Astrocyte of the cerebellum (primary cell): ENCODE measurements at regions of chr1 and their contacts with region 1.

Region 1: DNA sequence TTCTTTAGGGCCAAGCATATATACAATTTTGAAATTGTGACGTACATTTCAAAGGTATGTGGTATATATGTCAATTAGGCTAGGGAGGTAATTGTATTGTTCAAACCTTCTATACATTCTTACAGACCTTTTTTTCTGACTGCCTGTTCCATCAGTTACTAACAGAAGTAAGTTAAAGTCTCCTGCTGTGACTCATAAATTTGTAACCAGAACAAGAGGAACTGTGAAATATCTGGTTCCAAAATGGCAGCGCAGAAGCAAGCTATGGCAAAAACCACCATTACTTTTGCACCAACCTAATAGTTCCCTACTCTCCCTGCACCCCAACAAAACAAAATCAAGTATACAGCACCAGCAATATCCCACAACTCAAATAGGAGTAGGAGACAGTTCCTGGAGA is 93.6 kb downstream of the ENAH start:
- DNase-seq: no peak
- H3K4me3 ChIP-seq: no peak overlapping the region
- CTCF ChIP-seq: no peak

Region 2: DNA sequence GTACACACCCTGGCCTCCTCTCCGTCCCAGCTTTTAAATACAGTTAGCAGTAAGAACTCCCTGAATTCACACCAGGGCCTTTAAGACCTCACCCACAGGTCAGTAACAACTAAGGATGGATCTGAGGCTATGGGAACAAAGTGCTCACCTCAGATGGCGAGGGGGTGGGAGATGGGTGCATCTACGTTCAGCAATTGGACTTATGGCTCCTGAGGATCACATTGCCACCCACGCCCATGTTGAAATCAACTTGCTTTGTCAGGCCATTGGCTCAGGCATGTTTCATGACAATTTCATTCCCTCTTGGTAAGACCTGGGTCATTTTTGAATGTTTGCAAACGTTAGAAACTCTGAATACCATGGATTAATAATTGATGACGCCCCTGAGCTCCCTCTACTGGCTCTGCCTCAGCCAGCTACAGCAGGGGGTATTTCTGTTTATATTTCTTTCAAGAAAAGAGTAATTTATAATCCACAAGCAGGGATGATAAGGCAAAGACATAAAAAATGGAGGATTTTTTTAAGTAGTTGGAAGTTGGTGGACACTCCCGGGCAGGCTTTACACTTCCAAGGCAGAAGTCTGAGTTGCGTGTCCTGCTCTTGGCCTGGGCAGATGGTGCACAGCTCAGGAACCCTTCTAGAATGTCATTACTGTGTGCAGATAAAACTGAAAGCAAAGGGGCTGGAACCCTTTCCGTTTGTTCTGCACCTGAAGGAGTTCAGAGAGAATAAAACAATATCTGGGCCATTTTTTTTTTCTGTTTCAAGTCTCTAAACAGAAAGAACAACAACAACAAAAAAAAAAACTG is 117.8 kb before region 1 on chr1:
- in situ Hi-C with region 1: no loop called
- DNase-seq: no peak
- H3K4me3 ChIP-seq: no peak overlapping the region
- CTCF ChIP-seq: peak; percentile 24

Region 3: GRCh38 chr1:225660544-225660946 is 101.2 kb after region 1 on chr1:
- in situ Hi-C with region 1: loop called (anchors 5 kb)
- DNase-seq: no peak
- H3K4me3 ChIP-seq: no peak overlapping the region
- CTCF ChIP-seq: no peak

Region 4: GRCh38 chr1:225766967-225767633 is 207.8 kb after region 1 on chr1:
- in situ Hi-C with region 1: loop called (anchors 5 kb)
- DNase-seq: peak; percentile 89
- H3K4me3 ChIP-seq: no peak overlapping the region
- CTCF ChIP-seq: no peak